ENCODE measurements at regions of chr19 and their contacts with region 1.

Region 1: DNA sequence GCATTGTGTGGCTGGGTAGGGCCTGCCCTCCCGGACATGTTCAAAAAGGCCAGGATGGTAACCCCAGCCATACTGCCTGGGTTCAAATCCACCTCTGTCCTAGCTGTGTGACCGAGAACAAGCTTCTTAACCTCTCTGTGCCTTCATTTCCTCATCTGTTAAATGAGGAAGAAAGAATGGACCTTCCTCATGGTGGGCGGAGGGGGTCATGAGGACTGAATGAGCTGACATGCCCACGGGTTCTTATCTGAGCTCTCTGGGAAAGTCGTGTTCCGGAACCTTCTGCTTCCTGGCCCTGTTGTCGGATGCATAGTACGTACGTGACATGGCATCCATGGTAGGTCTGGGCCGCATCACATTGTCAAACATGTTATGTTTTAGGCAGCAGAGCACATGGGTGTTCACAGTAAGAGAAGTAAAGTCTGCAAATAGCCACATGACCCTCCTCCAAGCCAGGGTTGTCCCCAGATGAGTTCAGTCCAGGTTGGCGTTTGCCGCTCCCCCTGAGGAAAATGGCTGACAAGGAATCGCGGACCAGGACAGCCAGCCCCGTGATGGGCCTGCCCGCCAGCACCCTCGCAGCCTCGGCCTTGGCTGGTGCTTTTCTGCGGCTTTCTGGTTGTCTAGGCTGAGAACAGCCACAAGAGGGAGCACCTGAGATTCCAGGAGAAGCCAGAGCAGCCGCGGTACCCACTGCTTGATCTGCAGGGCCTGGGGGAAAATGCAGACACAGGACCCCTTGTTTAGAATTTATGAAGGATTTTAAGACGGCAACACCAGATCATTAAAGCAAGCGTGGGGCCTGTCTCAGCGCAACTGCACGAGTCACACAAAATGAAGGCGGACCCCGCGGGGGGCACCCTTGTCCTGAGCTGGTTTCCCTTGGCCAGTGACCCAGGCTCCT is 2.4 kb upstream of the NTN5 start:
- DNase-seq: peak; percentile 82 to 88
- H3K4me3 ChIP-seq: no peak overlapping the region
- H3K27ac ChIP-seq: no peak overlapping the region
- H3K4me1 ChIP-seq: peaks cover 0 to 9% (median 3%) of the 10 kb centered on the region in 4 donors
- H3K27me3 ChIP-seq: no peaks in the 10 kb centered on the region
- CTCF ChIP-seq: peak; percentile 81 to 82

Region 2: DNA sequence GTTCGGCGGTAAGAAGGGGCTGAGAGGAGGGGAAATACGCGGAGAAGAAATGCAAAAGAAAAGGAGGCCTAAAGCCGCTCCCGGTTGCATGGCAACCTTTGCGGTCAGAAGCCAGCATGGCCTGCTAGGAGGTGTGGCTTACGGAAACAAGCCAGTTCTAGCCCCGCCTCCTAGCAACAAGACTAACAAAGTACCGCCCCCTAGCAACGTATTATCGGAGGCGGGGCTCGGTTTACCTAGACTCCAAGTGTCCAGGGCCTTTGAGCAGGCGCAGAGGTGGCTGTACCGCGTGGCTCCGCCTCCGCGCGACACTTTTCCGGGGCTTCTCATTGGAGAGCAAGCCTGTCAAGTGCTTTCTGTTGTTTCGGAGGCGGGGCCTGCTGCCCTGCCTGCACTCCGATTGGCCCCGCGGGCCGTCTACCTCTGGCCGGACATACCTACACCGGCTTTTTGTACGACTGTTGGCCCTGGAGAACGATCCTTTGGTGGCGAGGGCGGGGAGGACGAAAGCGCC is 206.3 kb before region 1 on chr19:
- intact Hi-C with region 1: no loop called
- DNase-seq: peak; percentile 100
- H3K4me3 ChIP-seq: peak overlapping the region; percentile 67 to 90
- H3K27ac ChIP-seq: peak overlapping the region; percentile 88 to 98
- H3K4me1 ChIP-seq: peaks cover 0 to 37% (median 19%) of the 10 kb centered on the region in 4 donors
- H3K27me3 ChIP-seq: no peaks in the 10 kb centered on the region
- CTCF ChIP-seq: no peak

Region 3: DNA sequence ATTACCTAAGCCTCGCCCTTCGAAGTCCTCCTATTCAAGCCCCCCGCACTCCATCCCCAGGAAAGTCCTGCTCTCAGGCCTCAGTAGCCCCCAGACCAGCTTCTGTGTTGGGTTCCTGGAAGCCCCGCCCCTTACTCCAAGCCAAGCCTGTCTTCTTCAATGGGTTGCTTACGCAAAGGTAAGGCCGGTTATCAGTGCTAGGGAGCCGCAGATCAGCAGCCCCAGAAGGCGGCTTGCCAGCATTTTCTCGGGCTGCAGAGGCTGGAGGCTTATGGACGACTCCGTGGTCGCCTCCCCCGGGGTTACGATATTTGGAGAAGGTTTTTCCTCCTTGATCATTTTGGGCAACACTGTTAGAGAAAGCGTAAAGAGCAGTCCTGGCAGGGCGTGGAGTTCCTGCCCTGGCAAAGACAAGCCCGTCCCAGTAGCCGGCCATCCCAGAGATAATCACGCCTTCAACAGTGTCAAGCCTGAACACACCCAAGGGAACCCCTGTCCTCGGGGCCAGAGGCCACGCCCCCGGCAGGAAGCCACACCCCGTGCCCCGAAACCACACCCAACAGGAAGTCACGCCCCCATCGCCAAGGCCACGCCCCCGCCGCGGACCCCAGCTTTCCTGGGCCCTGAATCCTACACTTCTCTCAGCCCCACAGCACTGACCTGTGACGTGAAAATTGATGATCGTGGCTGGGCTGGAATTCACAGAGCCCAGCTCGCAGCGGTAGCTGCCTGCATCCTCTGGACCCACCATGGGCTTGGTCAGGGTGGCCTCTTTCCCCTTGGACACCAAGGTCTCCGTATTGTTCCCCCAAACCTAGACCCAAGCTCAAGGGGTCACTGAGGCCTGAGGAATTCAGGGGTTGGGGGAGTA is 66.2 kb after region 1 on chr19:
- intact Hi-C with region 1: loop called (anchors 5 kb)
- DNase-seq: no peak
- H3K4me3 ChIP-seq: peak overlapping the region in 1 of 2 donors; percentile 8
- H3K27ac ChIP-seq: no peak overlapping the region
- H3K4me1 ChIP-seq: peaks cover 0 to 25% (median 14%) of the 10 kb centered on the region in 4 donors
- H3K27me3 ChIP-seq: peaks cover 0 to 11% of the 10 kb centered on the region in 2 donors
- CTCF ChIP-seq: no peak